GM12878 (cell line): ENCODE measurements at regions of chr17 and their contacts with region 1.

Region 1: DNA sequence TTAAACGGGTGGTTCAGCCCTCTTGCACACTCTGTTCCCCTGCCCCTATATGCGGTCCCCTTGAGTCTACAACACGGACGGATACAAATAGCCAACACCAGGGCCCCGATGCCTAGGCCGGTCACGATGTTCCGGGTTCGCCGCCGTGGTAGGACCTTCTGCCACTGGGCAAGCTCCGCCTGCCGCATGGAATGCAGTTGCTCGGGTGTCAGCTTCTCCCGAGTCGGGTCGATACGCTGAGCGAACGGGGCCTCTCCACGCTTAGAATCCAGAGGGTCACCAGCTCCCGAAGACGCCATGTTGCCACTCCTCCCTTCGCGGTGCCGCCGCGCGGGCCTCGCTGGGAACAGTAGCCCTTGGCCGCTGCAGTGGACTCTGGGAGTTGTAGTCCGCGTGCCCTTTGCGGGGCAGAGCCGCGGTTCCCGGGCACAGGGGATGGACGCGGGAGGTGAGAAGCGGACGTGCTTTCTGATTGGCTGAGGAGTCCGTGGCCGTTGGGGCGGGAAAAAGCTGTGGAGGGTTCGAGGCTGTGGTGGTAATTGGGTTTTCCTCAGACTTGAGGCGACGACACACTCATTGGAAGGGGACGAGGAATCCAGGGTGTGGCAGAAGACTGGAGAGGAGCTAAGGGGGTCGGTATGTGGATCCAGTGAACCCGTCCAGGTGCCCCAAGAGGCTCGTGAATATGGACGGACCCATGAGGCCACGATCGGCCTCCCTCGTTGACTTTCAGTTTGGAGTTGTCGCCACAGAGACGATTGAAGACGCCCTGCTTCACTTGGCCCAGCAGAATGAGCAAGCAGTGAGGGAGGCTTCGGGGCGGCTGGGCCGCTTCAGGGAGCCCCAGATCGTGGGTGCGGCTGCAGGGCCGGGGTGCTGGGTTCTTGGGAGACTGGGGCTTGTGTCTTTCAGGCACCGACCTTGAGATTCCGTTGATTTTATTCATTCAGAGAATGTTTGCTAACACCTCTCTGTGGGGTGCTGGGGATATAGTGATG is at the starts of genes CNTD1 and COA3:
- DNase-seq: peak; percentile 31
- ATAC-seq: peak; percentile 100
- H3K4me3 ChIP-seq: peak within 1 kb of the TSS; percentile 76
- H3K27ac ChIP-seq: no peak within 1 kb of the TSS
- H3K4me1 ChIP-seq: peaks cover 10% of the 10 kb centered on the region
- H3K27me3 ChIP-seq: no peaks in the 10 kb centered on the region
- CTCF ChIP-seq: no peak
- EP300 ChIP-seq: no peak
- POLR2A ChIP-seq: peak; percentile 85
- RAD21 ChIP-seq: no peak
- polyA plus RNA-seq, gene CNTD1: 0.80 to 1.4 TPM
- polyA plus RNA-seq, gene COA3: 86.5 to 123 TPM

Region 2: GRCh38 chr17:42508426-42509165 is 290.1 kb before region 1 on chr17:
- CTCF ChIA-PET with region 1: no interaction called
- POLR2A ChIA-PET with region 1: no interaction called
- RAD21 ChIA-PET with region 1: no interaction called
- SMC1A ChIA-PET with region 1: no interaction called
- in situ Hi-C with region 1: no loop called
- intact Hi-C with region 1: no loop called
- DNase-seq: no peak
- ATAC-seq: no peak
- H3K4me3 ChIP-seq: no peak overlapping the region
- H3K27ac ChIP-seq: no peak overlapping the region
- H3K4me1 ChIP-seq: peaks cover 9% of the 10 kb centered on the region
- H3K27me3 ChIP-seq: no peaks in the 10 kb centered on the region
- CTCF ChIP-seq: no peak
- EP300 ChIP-seq: no peak
- POLR2A ChIP-seq: no peak
- RAD21 ChIP-seq: no peak

Region 3: DNA sequence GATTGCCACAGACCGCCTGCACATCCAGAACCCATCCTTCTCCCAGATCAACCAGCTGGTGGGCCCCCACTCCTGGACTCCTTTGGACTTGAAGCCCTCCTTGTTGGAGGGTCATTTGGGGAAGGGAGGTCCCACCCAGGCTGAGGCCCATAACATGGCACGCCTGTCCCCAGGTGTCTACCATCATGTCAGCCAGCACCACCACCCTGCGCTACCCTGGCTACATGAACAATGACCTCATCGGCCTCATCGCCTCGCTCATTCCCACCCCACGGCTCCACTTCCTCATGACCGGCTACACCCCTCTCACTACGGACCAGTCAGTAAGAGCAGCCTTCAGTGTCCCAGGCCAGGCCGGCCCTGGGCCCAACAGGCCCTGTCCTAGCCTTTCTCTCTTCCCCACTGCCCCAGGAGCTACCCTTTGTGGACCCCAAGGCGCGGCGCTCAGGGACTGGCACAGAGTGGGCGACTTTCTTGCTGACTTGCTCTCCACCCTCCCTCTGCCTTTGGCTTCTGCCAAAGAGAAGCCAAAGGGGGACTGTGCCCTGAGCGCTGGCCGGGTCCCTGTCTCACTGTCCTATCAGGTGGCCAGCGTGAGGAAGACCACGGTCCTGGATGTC is 184.9 kb before region 1 on chr17:
- CTCF ChIA-PET with region 1: no interaction called
- POLR2A ChIA-PET with region 1: no interaction called
- RAD21 ChIA-PET with region 1: no interaction called
- SMC1A ChIA-PET with region 1: no interaction called
- in situ Hi-C with region 1: no loop called
- intact Hi-C with region 1: no loop called
- DNase-seq: no peak
- ATAC-seq: no peak
- H3K4me3 ChIP-seq: no peak overlapping the region
- H3K27ac ChIP-seq: no peak overlapping the region
- H3K4me1 ChIP-seq: peaks cover 14% of the 10 kb centered on the region
- H3K27me3 ChIP-seq: no peaks in the 10 kb centered on the region
- CTCF ChIP-seq: no peak
- EP300 ChIP-seq: no peak
- POLR2A ChIP-seq: no peak
- RAD21 ChIP-seq: no peak

Region 4: DNA sequence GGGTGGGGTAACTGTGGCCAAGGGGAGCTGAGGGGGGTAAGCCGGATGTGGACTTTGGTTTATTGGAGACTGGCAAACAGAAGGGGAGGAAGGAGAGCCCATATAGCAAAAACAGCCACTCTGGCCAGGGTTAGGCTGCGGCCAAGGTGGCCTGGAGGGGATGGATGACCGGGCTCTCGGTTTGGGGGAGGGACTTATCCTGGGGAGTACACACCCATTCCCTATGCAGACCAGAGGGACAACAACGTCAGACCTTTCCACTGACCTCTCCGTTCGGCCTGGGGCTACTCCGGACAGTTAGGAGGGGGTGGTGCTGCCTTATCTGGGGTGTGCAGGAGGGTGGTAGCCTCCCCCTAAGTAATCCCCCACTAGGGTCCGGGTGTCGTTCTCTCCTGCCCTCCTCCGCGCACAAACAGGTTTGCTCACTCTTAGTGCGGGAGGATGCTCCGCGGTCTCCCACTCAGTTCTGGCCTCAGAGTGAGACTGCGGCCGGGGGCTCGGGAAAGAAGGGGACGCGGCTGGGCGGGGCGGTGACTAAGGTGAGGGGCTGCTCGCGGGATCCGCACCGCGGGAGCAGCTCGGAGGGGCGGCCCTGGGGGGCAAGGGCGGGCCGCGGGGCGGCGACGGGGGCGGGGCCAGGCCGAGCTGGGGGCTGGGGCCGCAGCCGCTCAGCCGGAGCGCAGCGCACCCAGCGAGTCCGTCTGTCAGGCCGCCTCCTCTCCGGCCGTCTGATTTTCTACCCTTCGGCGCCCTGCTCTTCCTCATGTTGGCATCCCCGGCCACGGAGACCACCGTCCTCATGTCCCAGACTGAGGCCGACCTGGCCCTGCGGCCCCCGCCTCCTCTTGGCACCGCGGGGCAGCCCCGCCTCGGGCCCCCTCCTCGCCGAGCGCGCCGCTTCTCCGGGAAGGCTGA is 18.5 kb before region 1 on chr17 and contains the start of gene WNK4:
- CTCF ChIA-PET with region 1: no interaction called
- POLR2A ChIA-PET with region 1: no interaction called
- RAD21 ChIA-PET with region 1: no interaction called
- SMC1A ChIA-PET with region 1: no interaction called
- in situ Hi-C with region 1: no loop called
- intact Hi-C with region 1: no loop called
- DNase-seq: no peak
- ATAC-seq: no peak
- H3K4me3 ChIP-seq: no peak within 1 kb of the TSS
- H3K27ac ChIP-seq: no peak within 1 kb of the TSS
- H3K4me1 ChIP-seq: peaks cover 9% of the 10 kb centered on the region
- H3K27me3 ChIP-seq: peaks cover 5 to 20% of the 10 kb centered on the region in 2 experiments
- CTCF ChIP-seq: no peak
- EP300 ChIP-seq: no peak
- POLR2A ChIP-seq: 0 out of 2 replicates have a peak, but pooled peaks have one; percentile 7
- RAD21 ChIP-seq: no peak
- polyA plus RNA-seq, gene WNK4: not detected

Region 5: DNA sequence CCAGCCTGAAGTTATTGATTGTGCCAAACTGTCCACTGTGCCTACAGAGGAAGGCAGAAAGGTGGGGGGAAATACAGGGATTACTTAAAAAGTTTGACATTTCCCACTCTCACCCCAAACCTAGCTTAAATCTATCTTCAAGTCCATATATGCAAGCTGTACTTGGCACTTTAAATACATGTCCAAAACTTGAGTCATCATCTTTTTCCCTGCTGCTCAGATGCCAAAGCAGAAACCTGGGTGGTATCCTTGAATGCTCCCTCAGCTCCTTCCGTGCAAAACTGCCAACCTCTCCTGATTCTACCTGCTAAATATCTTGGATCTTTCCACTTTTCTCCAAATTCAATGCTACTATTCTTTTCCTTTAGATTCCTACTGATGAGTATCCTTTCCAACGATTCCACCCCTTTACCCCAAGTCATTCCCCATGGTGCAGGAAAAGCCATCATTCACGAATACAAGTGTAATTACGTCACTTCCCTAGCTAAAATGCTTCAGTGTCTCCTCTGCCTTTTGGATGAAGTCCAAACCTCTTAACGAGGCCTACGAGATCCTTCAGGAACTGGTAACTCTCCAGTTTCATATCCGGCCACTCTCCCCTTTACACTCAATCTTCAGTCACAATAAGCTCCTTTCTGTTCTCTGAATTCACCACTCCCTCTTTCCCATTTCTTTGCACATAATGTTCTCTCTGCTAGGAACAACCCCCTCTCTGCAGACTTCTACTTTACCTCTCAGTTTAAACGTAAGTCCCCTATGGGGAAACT is 16.1 kb after region 1 on chr17:
- CTCF ChIA-PET with region 1: interaction called, 11 read pairs
- POLR2A ChIA-PET with region 1: interaction called, 5 read pairs
- RAD21 ChIA-PET with region 1: interaction called, 3 read pairs
- SMC1A ChIA-PET with region 1: interaction called, 3 read pairs
- in situ Hi-C with region 1: no loop called
- intact Hi-C with region 1: no loop called
- DNase-seq: no peak
- ATAC-seq: no peak
- H3K4me3 ChIP-seq: no peak overlapping the region
- H3K27ac ChIP-seq: no peak overlapping the region
- H3K4me1 ChIP-seq: no peaks in the 10 kb centered on the region
- H3K27me3 ChIP-seq: no peaks in the 10 kb centered on the region
- CTCF ChIP-seq: no peak
- EP300 ChIP-seq: no peak
- POLR2A ChIP-seq: no peak
- RAD21 ChIP-seq: no peak